ENCODE measurements at regions of chr5 and their contacts with region 1.

Region 1: DNA sequence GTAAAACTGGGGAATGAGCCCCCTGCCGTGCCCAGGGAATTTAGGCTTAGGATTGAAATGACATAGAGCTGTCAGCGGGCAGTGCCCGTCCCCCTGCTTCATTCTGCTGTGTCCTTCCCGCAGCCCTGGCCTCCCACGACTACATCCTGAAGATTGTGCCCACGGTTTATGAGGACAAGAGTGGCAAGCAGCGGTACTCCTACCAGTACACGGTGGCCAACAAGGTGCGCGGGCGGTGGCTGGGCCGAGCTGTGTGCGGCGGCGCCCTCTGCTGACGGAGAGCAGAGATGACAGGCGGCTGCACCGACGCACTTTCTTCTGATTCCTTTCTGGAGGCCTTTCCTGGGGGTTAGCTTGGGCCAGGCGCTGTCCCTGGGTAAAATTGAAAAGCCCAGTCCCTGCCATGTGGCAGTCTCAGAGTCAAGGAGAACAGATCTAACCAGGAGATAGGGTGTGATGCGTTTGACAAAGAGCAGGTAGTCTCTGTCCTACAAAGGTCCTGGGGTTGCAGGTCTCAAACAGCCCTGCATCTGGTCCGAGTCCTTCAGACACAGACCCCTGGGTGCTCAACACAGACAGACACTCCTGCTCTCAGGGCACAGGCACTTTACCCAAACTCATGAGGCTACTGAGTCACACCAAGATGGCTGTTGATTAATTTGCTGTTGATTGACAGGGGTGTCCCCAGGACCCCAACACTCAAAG is 26.8 kb upstream of the RPL26L1 start:
- ATAC-seq: peak; percentile 62 to 85 (median 68)
- H3K4me3 ChIP-seq: no peak overlapping the region
- H3K27ac ChIP-seq: no peak overlapping the region
- H3K4me1 ChIP-seq: peaks cover 11 to 17% of the 10 kb centered on the region in 2 donors

Region 2: DNA sequence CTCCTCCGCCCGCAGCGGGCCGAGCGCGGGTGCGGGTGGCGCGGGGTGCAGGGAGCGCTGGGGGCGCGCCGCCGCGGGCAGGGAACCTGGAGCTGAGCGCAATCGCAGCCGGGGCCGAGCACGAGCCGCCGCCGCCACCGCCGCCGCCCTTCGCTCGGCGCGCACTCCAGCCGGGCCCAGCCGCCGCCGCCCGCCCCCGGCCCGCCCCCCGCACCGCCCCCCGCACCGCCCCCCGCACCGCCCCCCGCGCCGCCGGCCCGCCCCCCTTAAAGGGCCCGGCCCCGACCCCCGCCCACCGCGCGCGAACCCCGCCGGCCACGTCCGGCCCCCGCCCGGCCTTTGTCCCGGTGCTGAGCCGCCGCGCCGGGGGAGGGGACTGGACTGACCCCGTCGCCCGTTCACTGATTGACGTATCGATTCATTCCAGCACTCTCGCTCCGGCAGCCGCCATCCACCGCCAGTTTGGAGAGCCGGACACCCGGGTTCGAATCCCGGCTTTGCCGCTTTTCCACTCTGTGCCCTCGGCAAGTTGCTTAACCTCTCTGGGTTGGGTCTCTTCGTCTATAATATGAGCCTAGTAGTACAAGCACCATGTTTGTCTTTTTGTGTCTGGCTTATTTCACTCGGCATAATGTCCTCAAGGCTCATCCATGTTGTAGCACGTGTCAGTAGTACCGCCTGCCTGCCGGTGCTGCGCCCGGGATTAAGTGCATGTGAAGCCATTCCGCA is 477.9 kb before region 1 on chr5 and contains the start of gene SH3PXD2B:
- in situ Hi-C with region 1: loop called in 1 of 9 experiments (anchors 25 kb)
- ATAC-seq: peak; percentile 22 to 75 (median 72)
- H3K4me3 ChIP-seq: peak within 1 kb of the TSS; percentile 69 to 99 (median 76)
- H3K27ac ChIP-seq: peak within 1 kb of the TSS; percentile 71 to 91
- H3K4me1 ChIP-seq: peaks cover 33 to 38% of the 10 kb centered on the region in 2 donors
- total RNA-seq, gene SH3PXD2B: 18.0 to 35.7 (median 24.3) TPM

Region 3: GRCh38 chr5:172479044-172479783 is 453.3 kb before region 1 on chr5:
- in situ Hi-C with region 1: loop called in 4 of 9 experiments (anchors 25 kb)
- ATAC-seq: peak; percentile 79 to 99 (median 93)
- H3K4me3 ChIP-seq: no peak overlapping the region
- H3K27ac ChIP-seq: no peak overlapping the region
- H3K4me1 ChIP-seq: peaks cover 2 to 7% of the 10 kb centered on the region in 2 donors

Region 4: DNA sequence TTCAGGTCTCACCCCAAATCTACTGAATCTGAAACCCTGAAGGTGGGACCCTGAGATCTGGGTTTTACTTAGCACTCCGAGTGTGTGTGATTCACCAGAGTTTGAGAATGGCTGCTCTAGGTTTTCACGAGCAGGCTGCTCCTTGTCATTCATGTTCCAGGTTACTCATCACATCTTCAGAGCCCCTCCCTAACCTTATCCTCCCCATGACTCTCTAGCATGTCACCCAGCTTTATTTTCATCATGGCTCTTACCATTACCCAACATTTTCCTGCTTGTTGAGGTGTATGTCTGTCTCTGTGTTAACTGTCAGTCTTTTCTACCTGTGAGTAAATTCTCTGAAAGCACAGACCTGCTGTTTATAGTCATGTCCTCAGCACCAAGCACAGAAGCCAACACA is 1432.2 kb after region 1 on chr5:
- in situ Hi-C with region 1: no loop called
- ATAC-seq: no peak
- H3K4me3 ChIP-seq: no peak overlapping the region
- H3K27ac ChIP-seq: no peak overlapping the region
- H3K4me1 ChIP-seq: no peaks in the 10 kb centered on the region